Activated CD4-positive, alpha-beta T cell treated with anti-CD3 and anti-CD28 coated beads, Interleukin-2, amount 10 ng/mL, durations not matched to agents 24 days and 14 days (primary cell): ENCODE measurements at regions of chr17 and their contacts with region 1.

Region 1: DNA sequence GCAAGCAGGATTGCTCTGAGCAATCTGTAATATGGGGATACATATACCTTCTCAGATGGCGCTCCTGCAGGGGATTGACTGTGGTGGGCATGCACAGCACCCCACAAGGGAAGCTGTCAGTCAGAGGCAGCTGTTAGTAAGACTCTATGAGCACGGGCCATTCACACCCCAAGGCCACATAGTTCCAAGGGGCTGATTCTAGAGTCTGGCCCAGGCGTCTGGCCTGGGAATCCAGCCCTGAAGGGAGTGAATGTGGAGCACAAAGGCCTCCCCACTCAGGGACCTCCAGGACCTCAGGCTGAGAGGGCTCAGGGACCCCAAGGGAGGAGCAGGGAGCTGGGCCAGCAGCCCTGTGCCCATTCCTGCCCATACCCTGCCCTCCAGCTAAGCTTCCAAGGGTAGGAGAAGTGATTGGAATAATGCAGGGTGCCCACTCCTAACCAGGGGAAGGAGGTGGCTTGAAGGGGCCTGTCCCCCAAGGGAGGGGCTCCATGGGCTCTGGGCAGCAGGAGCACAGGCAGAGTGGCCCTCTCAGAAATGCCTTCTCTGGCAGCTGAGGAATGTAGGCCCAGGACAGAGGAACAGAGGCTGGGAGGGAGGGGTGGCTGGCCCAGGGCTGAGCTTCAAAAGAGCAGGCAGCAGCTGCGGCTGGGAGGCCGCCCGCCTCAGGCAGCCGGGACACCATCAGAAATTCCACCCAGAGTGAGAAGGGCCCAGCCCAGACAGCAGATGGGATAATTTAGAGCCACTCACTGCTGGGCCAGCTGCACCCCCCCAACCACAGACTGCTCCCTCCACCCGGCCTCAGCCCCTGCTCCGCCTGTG is 48.9 kb upstream of the MRPS23 start:
- DNase-seq: no peak
- H3K4me3 Mint-ChIP-seq: no peak overlapping the region
- H3K27ac Mint-ChIP-seq: no peak overlapping the region
- H3K4me1 Mint-ChIP-seq: peaks cover 14% of the 10 kb centered on the region
- H3K27me3 Mint-ChIP-seq: peaks cover 1% of the 10 kb centered on the region

Region 2: DNA sequence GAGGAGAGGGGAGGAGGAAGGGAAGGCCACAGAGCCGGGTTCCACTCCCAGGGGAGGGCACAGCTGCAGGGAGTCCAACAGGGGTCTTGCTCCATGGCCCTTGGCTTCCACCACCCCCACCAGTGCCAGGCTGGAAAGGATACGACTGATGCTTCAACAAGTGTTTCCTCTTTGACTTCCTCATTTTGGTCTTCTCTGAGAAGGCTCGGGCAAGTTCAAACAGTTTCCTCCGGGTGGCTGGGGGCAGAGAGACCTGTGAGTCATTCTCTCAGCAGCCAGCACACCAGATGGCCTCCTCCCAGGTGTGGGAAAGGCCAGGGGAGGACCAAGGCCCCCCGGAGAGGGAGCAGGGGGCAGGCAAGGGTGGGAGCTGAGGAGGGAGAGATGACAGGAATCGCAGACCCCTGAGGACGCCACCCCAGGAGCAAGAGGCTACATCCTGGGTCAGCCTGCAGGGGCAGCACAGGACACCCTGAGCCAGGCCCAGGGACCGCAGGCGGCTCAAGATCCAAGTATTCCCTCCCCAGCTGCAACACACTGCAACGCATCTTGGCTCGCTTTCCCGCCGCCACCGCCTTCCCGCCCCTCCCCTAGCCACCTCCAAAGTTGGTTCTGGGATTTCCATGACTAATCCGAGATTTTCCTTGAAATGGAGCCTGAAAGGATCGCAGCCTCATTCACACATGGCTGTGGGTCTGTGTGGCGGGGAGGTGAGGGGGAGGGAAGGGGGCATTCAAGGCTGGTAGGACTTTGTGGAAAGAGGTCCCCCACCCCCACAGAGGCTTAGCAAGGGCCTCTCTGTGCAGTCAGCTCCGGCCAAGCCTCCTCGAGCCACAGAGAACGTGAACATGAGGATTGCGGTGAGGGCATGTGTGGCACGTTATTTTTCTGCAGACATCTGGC is 30.4 kb before region 1 on chr17:
- intact Hi-C with region 1: loop called (anchors 1 kb)
- DNase-seq: peak; percentile 77
- H3K4me3 Mint-ChIP-seq: peak overlapping the region; percentile 24
- H3K27ac Mint-ChIP-seq: peak overlapping the region; percentile 72
- H3K4me1 Mint-ChIP-seq: peaks cover 9% of the 10 kb centered on the region
- H3K27me3 Mint-ChIP-seq: peaks cover 21% of the 10 kb centered on the region

Region 3: GRCh38 chr17:58060596-58061191 is 162.0 kb after region 1 on chr17:
- intact Hi-C with region 1: no loop called
- DNase-seq: no peak
- H3K4me3 Mint-ChIP-seq: no peak overlapping the region
- H3K27ac Mint-ChIP-seq: no peak overlapping the region
- H3K4me1 Mint-ChIP-seq: no peaks in the 10 kb centered on the region
- H3K27me3 Mint-ChIP-seq: peaks cover 11% of the 10 kb centered on the region